BJ (cell line): ENCODE measurements at regions of chr4 and their contacts with region 1.

Region 1: GRCh38 chr4:118835571-118836300 is at the start of gene SEC24D:
- DNase-seq: no peak
- H3K4me3 ChIP-seq: peak within 1 kb of the TSS; percentile 93
- H3K27me3 ChIP-seq: no peaks in the 10 kb centered on the region
- CTCF ChIP-seq: no peak
- polyA plus RNA-seq, gene SEC24D: 80.3 and 84.3 TPM in 2 replicates

Region 2: DNA sequence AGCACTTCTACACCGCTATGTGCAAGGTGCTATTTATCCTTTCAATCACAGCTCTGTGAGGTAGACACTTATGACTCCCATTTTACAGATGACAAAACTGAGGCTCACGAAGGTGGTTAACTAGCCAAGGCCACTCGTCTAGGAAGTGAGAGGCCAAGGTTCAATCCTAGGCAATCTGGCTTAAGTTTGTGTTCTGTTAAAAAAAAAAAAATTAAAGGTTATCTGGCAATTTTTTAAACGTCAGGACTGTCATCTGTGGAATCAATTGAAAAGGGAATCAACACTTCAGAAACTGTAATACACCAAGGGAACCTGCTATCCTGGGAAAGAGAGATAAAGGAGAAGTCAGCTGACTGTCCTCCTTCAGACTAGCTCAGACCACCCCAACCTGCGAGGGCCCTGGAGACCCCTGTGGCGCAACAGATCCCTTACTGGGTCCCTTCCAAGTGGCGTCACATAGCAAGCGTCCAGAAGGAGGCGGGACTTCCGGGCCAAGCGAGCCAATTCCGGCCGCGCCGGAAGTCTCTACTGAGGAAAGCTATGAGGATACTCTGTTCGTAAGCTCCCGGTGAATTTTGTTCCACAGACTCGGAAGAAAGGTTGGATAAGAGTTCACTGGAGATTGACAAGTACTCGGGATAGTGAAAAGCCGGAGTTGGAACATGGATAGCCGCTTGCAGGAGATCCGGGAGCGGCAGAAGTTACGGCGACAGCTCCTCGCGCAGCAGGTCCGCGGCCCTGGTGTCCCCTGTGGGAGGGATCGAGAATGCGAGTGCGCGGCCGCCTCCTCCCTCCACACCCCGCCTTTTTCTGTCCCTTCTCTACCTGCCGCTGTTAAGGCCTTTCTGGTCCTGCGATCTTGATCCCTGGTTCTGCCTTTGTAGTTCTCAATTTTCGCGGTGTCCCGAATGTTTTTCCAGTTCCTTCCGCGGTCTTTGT is 150.6 kb before region 1 on chr4 and contains the start of gene METTL14:
- CTCF ChIA-PET with region 1: no interaction called
- POLR2A ChIA-PET with region 1: interaction called, 11 read pairs
- DNase-seq: peak; percentile 56
- H3K4me3 ChIP-seq: peak within 1 kb of the TSS; percentile 79
- H3K27me3 ChIP-seq: no peaks in the 10 kb centered on the region
- CTCF ChIP-seq: no peak
- polyA plus RNA-seq, gene METTL14: 10.2 and 23.4 TPM in 2 replicates

Region 3: DNA sequence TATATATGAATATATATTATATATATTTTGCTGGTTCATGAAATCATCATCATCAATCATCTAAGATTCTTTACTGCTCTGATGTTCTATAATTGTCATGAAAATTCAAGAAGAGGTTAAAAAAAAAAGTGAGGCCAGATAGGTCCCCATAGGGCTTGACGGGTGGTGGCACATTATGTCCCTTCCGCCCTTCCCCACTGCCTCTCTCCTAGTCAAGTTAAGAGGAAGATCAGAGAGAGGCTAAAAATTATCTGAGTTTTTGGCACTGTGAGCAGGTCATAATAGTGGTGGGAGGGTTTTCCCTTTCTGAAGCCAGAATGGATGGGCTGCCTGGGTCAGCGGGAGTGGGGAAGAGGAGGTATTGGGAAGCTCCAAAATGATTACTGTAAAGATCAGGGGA is 58.3 kb after region 1 on chr4:
- CTCF ChIA-PET with region 1: interaction called, 4 read pairs
- POLR2A ChIA-PET with region 1: interaction called, 12 read pairs
- DNase-seq: no peak
- H3K4me3 ChIP-seq: no peak overlapping the region
- H3K27me3 ChIP-seq: no peaks in the 10 kb centered on the region
- CTCF ChIP-seq: no peak